ENCODE measurements at regions of chr22 and their contacts with region 1.

Region 1: DNA sequence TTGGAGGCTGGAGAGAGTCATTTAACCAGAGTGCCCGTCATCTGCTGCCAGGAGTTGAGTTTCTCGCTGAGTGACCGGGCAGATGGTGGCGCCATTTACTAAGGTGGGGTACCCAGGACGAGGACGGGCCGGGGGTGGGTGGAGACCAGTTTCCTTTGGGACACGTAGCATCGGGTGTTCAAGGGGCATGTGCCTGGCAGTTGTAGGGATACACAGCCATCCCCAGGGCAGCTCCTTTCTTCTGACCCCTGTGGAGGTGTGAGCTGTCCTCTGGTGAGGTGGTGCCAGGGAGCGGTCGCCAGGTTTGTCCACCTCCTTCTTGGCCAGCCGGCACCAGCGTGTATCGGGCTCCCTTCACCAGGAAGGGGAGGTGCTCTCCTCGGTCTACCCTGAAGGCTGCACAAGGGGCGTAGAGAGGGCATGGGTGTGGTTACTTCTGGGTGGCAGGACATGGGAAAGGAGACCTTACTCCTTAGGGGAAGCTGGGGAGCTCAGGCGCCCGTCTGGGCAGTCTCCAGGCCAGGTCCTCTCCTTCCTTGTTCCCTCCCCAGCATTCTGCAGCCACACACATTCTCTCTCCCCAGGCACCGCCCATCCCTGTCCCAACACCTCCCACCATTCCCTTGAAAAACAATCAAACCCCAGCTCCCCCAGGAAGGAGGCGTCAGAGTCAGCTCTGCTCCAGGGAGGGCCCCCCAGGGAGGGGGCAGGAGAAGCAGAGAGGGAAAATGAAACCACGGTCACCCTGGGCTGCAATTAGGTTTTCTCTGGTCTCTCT is 10.3 kb upstream of the MB start:
- DNase-seq: no peak
- H3K4me3 ChIP-seq: peak overlapping the region; percentile 39 to 72 (median 56)
- H3K27ac ChIP-seq: peak overlapping the region; percentile 79 to 92 (median 88)
- H3K4me1 ChIP-seq: peaks cover 11 to 40% (median 17%) of the 10 kb centered on the region in 3 donors
- H3K27me3 ChIP-seq: no peaks in the 10 kb centered on the region
- CTCF ChIP-seq: peak in 5 of 6 experiments; percentile 41 to 53 (median 46)
- POLR2A ChIP-seq: no peak

Region 2: GRCh38 chr22:35921777-35922176 is 294.3 kb after region 1 on chr22:
- intact Hi-C with region 1: loop called (anchors 10 kb)
- DNase-seq: no peak
- H3K4me3 ChIP-seq: no peak overlapping the region
- H3K27ac ChIP-seq: peak overlapping the region in 3 of 4 donors; percentile 59 to 78 (median 69)
- H3K4me1 ChIP-seq: peaks cover 5 to 56% (median 33%) of the 10 kb centered on the region in 3 donors
- H3K27me3 ChIP-seq: no peaks in the 10 kb centered on the region
- CTCF ChIP-seq: peak in 5 of 6 experiments; percentile 38 to 68 (median 50)
- POLR2A ChIP-seq: no peak

Region 3: DNA sequence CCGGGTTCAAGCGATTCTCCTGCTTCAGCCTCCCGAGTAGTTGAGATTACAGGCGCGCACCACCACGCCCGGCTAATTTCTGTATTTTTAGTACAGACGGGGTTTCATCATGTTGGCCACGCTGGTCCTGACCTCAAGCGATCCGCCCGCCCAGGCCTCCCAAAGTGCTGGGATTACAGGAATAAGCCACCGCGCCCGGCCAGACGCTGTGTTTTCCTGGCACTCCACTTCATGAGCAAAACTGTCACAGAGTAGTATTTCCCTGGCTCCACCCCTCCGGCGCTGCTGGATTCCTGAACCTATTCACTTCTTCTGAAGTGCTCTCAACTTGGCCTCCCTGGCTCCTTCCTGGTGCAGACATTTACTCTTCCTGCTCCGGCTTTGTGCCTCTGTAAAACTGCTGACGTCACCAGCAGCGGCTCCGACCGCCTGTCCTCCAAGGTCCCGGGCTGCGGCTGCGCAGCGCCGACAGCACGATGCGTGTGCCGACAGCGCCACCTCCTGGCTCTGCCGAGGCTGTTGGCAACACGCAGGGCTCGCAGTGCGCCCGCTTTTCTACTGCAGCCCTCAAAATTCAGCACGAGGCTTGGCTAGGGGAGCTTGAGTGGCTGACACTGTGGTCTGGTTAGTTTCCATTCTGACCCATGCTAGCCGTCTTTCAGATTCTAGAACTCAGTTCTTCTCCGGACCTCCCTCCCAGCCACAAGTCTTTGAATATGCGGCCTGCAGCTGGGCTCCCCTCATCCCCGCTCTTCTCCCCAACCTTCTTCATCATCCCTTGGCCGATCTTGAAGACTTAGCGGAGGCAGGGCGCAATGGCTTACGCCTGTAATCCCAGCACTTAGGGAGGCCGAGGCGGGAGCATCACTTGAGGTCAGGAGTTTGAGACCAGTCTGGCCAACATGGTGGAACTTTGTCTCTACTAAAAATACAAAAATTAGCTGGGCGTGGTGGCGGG is 496.5 kb after region 1 on chr22:
- intact Hi-C with region 1: loop called (anchors 10 kb)
- DNase-seq: peak; percentile 59
- H3K4me3 ChIP-seq: peak overlapping the region in 3 of 4 donors; percentile 36 to 53 (median 36)
- H3K27ac ChIP-seq: peak overlapping the region; percentile 77 to 92 (median 84)
- H3K4me1 ChIP-seq: peaks cover 0 to 14% (median 3%) of the 10 kb centered on the region in 3 donors
- H3K27me3 ChIP-seq: peaks cover 0 to 21% (median 0%) of the 10 kb centered on the region in 4 donors
- CTCF ChIP-seq: peak; percentile 93 to 100 (median 99)
- POLR2A ChIP-seq: peak in 1 of 4 donors; percentile 61